ENCODE measurements at regions of chr22 and their contacts with region 1.

Region 1: GRCh38 chr22:46057762-46058420 is 80.9 kb upstream of the WNT7B start:
- DNase-seq: no peak
- ATAC-seq: peak; percentile 76
- H3K4me3 Mint-ChIP-seq: peak overlapping the region; percentile 65
- H3K27ac Mint-ChIP-seq: peak overlapping the region; percentile 91
- H3K4me1 Mint-ChIP-seq: peaks cover 51% of the 10 kb centered on the region
- H3K27me3 Mint-ChIP-seq: no peaks in the 10 kb centered on the region
- CTCF ChIP-seq: no peak

Region 2: DNA sequence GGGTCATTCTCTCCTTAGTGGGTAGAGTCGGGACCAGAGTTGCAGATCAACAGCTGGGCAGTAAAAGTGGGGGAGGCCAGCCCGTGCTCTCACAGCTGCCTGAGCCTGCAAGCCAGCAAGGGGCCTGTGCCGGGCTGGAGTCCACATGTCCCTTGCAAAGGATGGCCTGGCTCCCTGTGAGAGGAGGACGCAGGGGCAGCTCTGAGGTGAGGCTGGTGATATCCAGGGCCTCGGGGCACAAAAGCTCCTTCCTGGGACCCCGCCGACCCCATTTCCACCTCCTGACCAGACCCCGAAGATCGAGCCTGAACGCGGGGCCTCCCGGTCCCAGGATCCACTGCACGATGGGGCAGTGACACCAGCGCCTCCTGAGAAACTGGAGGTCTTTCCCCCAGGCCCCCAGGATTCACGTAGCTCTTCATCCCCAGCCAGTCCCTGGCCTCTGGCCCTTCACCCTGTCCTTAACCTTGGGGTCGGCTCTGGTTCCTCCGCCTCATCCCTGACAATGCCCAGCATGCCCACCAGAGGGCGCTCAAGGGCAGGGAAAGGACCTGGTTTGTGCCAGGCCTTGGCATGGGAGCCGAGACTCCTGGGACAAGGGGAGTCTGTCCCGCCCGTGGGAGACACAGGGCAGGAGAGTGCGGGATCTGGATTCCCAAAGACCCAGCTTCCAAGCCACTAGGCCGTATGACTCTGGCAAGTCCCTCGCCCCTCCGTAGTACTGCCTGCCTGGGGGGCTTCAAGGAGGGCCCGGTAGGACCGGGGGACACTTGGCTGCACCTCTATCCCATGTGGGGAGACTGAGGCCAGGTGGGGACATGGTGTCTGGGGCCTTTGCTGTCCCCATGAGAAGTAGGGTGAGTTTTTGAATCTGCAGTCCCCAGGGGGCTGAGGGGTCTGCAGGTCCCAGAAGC is 63.1 kb before region 1 on chr22:
- CTCF ChIA-PET with region 1: no interaction called
- POLR2A ChIA-PET with region 1: no interaction called
- intact Hi-C with region 1: no loop called
- DNase-seq: peak; percentile 79
- ATAC-seq: peak; percentile 51
- H3K4me3 Mint-ChIP-seq: no peak overlapping the region
- H3K27ac Mint-ChIP-seq: no peak overlapping the region
- H3K4me1 Mint-ChIP-seq: peaks cover 26% of the 10 kb centered on the region
- H3K27me3 Mint-ChIP-seq: peaks cover 2% of the 10 kb centered on the region
- CTCF ChIP-seq: peak; percentile 24

Region 3: DNA sequence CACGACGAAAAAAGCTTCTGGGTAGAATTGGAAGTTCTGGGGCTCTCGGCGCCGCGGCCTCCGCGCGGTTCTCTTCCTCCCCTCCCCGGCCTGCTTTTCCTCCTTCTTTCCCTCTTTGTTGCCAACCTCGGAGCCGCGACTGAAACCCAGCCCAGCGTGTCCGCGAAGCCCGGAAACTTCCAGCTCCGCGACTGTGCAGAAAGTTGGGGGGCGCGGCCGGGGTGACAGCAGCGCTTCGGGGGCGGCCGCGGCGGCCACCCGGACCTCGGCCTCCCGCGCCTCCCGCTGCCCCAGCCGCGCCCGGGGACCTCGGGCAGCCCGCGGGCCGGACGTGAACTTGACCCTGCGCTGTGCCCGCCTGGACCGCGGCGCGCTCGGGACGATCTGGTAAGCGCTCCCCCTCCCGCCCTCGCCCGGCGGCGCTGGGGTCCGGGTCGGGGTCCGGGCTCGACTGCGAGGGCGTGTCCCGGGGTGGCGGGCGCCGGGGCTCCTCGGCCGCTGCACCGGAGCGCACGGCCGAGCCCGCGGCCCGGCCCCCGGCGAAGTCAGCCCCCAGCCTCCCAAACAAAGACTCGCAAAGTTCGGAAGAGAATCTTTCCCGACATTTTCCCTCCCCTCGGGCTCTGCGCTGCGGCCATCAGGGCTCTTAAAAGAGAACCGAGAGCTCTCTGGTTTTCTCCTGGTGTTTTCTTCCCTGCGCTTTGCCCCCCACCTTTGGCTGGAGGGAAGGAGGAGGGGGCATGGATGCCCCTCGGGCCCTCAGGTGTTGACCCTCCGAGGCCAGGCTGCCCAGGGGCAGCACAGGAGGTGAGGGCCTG is 13.1 kb before region 1 on chr22:
- CTCF ChIA-PET with region 1: no interaction called
- POLR2A ChIA-PET with region 1: interaction called, 34 read pairs
- intact Hi-C with region 1: loop called (anchors 1 kb)
- DNase-seq: no peak
- ATAC-seq: peak; percentile 58
- H3K4me3 Mint-ChIP-seq: peak overlapping the region; percentile 86
- H3K27ac Mint-ChIP-seq: peak overlapping the region; percentile 84
- H3K4me1 Mint-ChIP-seq: peaks cover 36% of the 10 kb centered on the region
- H3K27me3 Mint-ChIP-seq: no peaks in the 10 kb centered on the region
- CTCF ChIP-seq: no peak

Region 4: GRCh38 chr22:46071451-46072109 is 13.7 kb after region 1 on chr22:
- CTCF ChIA-PET with region 1: no interaction called
- POLR2A ChIA-PET with region 1: interaction called, 79 read pairs
- intact Hi-C with region 1: loop called (anchors 1 kb)
- DNase-seq: peak; percentile 61
- ATAC-seq: peak; percentile 22
- H3K4me3 Mint-ChIP-seq: peak overlapping the region; percentile 87
- H3K27ac Mint-ChIP-seq: peak overlapping the region; percentile 84
- H3K4me1 Mint-ChIP-seq: peaks cover 27% of the 10 kb centered on the region
- H3K27me3 Mint-ChIP-seq: no peaks in the 10 kb centered on the region
- CTCF ChIP-seq: no peak

Measured in activated B cell treated with CpG ODN at 0.5 μM for 24 hours (primary cell).